Activated CD4-positive, alpha-beta T cell treated with anti-CD3 and anti-CD28 coated beads, Interleukin-2, amount 10 ng/mL, durations not matched to agents 24 days and 14 days (primary cell): ENCODE measurements at regions of chr6 and their contacts with region 1.

Region 1: DNA sequence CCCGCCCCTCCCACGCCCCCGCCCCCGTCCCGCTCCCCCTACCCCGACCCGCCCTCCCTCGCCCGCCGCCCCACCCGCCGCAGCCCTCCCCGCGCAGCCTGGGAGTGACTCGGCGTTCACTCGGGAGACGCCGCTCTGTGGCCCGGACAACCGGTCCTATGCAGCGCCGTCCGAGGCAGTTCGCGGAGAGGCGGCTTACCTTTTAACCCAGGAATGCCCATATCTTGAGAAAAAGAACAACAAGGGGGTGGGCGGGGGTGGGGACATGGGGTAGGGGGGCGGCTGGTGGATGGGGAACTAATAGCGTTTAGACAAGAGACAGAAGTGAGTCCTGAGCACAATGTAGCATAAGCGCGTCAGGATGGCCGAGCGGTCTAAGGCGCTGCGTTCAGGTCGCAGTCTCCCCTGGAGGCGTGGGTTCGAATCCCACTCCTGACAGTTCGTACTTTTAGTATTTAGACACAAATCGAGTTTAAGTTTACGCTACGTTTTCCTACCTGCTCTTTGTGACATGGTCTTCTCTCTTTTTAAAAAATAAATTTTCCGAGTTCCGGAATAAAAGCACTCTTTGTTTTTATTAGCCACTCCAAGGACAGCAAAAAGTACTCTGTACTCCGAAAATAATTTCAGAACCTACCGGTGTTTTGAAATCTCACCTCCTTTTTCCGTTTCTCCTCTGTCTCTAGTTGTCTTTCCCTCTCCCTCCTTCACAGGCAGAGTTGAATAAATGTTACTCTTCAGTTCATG is 17.1 kb upstream of the HMGN4 start:
- DNase-seq: peak; percentile 95
- H3K4me3 Mint-ChIP-seq: peak overlapping the region; percentile 85
- H3K27ac Mint-ChIP-seq: peak overlapping the region; percentile 94
- H3K4me1 Mint-ChIP-seq: peaks cover 32% of the 10 kb centered on the region
- H3K27me3 Mint-ChIP-seq: peaks cover 4% of the 10 kb centered on the region

Region 2: GRCh38 chr6:25499615-25500235 is 1021.3 kb before region 1 on chr6:
- intact Hi-C with region 1: no loop called
- DNase-seq: no peak
- H3K4me3 Mint-ChIP-seq: no peak overlapping the region
- H3K27ac Mint-ChIP-seq: no peak overlapping the region
- H3K4me1 Mint-ChIP-seq: no peaks in the 10 kb centered on the region
- H3K27me3 Mint-ChIP-seq: no peaks in the 10 kb centered on the region

Region 3: GRCh38 chr6:26457806-26458688 is 63.0 kb before region 1 on chr6 and contains the start of gene BTN2A1:
- intact Hi-C with region 1: loop called (anchors 5 kb)
- DNase-seq: peak; percentile 92
- H3K4me3 Mint-ChIP-seq: peak within 1 kb of the TSS; percentile 95
- H3K27ac Mint-ChIP-seq: peak within 1 kb of the TSS; percentile 94
- H3K4me1 Mint-ChIP-seq: peaks cover 48% of the 10 kb centered on the region
- H3K27me3 Mint-ChIP-seq: no peaks in the 10 kb centered on the region
- total RNA-seq, gene BTN2A1: 16.5 and 19.8 TPM in 2 replicates

Region 4: DNA sequence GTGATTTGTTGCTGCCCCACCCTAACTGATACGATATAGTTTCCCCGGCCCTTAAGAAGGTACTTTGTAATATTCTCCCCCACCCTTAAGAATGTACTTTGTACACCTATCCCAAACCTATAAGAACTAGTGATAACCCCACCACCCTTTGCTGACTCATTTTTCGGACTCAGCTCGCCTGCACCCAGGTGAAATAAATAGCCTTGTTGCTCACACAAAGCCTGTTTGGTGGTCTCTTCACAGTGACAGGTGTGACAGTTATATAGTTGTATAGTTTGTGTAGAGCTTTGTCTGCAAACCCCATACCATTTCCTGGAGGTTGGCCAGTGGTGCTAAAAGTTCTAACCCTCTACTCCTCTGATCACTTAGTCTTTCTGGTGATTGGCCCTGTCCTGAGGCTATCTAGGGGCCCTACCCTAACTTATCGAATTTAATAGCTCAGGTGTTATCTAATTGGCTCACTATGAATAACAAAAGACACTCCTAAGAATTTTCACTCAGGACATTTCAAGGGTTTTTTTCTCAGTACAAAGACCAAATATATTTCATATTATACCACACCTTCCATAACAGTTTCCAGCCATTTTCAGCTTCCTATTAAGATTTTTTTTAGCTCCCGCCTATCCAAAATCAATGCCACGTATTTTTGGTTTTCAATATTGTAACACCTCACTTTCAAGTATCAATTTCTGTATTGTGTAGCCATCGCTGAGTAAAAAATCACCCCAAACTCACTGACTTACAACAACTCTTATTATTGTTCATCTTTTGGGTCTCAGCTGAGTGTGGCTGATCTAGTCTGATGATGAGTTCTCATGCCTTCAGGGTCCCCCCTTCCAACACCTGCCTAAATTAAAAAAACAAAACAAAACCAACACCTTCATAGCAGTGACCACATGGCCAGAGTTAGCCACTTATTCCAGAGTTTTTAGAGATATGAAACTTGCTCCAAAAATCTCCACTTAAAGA is 30.7 kb before region 1 on chr6:
- intact Hi-C with region 1: no loop called
- DNase-seq: no peak
- H3K4me3 Mint-ChIP-seq: no peak overlapping the region
- H3K27ac Mint-ChIP-seq: no peak overlapping the region
- H3K4me1 Mint-ChIP-seq: peaks cover 22% of the 10 kb centered on the region
- H3K27me3 Mint-ChIP-seq: peaks cover 2% of the 10 kb centered on the region

Region 5: DNA sequence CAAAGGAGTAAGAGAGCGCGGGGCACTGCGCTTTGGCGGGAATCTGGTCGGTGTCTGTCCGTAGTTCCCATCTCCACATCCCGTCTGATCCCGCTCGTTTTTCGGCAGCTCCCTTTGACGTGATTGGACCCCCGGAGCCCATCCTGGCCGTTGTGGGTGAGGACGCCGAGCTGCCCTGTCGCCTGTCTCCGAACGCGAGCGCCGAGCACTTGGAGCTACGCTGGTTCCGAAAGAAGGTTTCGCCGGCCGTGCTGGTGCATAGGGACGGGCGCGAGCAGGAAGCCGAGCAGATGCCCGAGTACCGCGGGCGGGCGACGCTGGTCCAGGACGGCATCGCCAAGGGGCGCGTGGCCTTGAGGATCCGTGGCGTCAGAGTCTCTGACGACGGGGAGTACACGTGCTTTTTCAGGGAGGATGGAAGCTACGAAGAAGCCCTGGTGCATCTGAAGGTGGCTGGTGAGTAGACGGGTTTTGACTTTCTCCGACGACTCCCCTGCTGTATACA is 19.5 kb before region 1 on chr6:
- intact Hi-C with region 1: loop called (anchors 2 kb)
- DNase-seq: peak; percentile 80
- H3K4me3 Mint-ChIP-seq: peak overlapping the region; percentile 81
- H3K27ac Mint-ChIP-seq: no peak overlapping the region
- H3K4me1 Mint-ChIP-seq: peaks cover 20% of the 10 kb centered on the region
- H3K27me3 Mint-ChIP-seq: peaks cover 49% of the 10 kb centered on the region

Region 6: GRCh38 chr6:26553635-26554446 is 32.8 kb after region 1 on chr6:
- intact Hi-C with region 1: loop called (anchors 1 kb)
- DNase-seq: peak; percentile 94
- H3K4me3 Mint-ChIP-seq: no peak overlapping the region
- H3K27ac Mint-ChIP-seq: no peak overlapping the region
- H3K4me1 Mint-ChIP-seq: peaks cover 22% of the 10 kb centered on the region
- H3K27me3 Mint-ChIP-seq: peaks cover 2% of the 10 kb centered on the region